H1 (cell line): ENCODE measurements at regions of chr22 and their contacts with region 1.

Region 1: DNA sequence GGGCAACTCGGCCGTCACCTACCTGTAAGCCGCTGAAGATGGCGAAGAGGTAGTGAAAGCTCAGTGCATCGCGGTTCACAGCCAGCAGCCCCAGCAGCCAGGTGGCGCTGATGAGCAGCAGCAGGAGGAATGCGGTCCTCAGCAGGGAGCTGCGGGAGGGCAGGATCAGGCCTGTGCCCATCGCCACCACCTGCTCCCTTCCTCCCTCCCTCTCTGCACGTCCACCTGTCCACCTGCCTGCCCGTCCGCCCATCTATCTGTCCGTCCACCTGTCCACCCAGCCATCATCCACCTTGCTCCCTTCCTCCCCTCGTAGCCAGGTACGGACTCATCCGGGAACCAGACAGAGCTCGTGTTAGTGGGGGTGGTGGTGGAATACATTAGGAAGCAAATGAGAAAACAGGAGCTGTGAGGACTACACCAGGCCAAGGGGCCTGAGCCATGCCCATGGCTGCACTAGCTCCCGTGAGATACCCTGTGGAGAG is 32.2 kb downstream of the TRMU start:
- DNase-seq: peak; percentile 61 to 96
- H3K4me3 ChIP-seq: no peak overlapping the region
- H3K27ac ChIP-seq: no peak overlapping the region
- H3K4me1 ChIP-seq: peaks cover 0 to 15% (median 6%) of the 10 kb centered on the region in 4 experiments; a peak in 5 of 7 replicates
- H3K27me3 ChIP-seq: no peaks in the 10 kb centered on the region
- CTCF ChIP-seq: peak; percentile 94 to 100 (median 100)
- EP300 ChIP-seq: peak in 1 of 2 experiments; percentile 49; a peak in 1 of 3 replicates
- POLR2A ChIP-seq: no peak
- RAD21 ChIP-seq: peak; percentile 85 to 88

Region 2: DNA sequence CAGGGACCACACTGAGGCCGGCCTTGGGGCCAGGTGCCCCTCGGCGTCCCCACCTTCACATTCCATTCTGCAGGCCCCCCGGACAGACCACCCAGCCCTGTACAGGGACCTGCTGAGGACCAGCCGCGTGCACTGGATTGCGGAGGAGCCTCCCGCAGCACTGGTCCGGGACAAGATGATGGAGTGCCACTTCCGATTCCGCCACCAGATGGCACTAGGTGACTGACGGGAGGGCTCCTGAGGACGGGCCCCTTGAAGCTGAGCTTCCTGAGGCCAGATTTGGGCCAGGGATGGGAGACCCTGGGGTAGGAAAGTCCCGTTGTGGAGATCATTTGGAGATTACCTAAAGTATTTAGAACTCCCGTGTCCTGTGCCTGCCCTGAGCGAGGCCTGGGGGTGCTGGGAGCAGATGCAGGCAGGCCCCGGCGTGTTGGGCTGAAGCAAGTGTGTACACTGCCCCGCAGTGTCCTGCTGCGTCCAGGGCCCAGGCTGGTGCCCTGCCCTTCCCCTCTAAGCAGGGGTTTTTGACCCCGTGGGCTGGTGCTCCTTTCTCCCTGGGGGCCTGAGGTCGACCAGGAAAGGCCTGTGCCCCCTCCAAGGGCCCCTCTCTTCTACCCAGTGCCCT is 12.3 kb before region 1 on chr22:
- CTCF ChIA-PET with region 1: interaction called, 44 read pairs
- POLR2A ChIA-PET with region 1: interaction called, 4 read pairs
- DNase-seq: peak in 1 of 2 experiments; percentile 97
- H3K4me3 ChIP-seq: no peak overlapping the region
- H3K27ac ChIP-seq: 0 out of 2 replicates have a peak overlapping the region, but pooled peaks have one; percentile 35
- H3K4me1 ChIP-seq: no peaks in the 10 kb centered on the region
- H3K27me3 ChIP-seq: no peaks in the 10 kb centered on the region
- CTCF ChIP-seq: peak; percentile 91 to 95 (median 92)
- EP300 ChIP-seq: no peak
- POLR2A ChIP-seq: no peak
- RAD21 ChIP-seq: peak; percentile 95 to 98

Region 3: GRCh38 chr22:46393873-46394272 is 26.1 kb after region 1 on chr22:
- CTCF ChIA-PET with region 1: interaction called, 14 read pairs
- POLR2A ChIA-PET with region 1: no interaction called
- DNase-seq: no peak
- H3K4me3 ChIP-seq: no peak overlapping the region
- H3K27ac ChIP-seq: no peak overlapping the region
- H3K4me1 ChIP-seq: peaks cover 0 to 2% (median 0%) of the 10 kb centered on the region in 4 experiments; a peak in 2 of 7 replicates
- H3K27me3 ChIP-seq: no peaks in the 10 kb centered on the region
- CTCF ChIP-seq: no peak
- EP300 ChIP-seq: no peak
- POLR2A ChIP-seq: no peak
- RAD21 ChIP-seq: no peak

Region 4: DNA sequence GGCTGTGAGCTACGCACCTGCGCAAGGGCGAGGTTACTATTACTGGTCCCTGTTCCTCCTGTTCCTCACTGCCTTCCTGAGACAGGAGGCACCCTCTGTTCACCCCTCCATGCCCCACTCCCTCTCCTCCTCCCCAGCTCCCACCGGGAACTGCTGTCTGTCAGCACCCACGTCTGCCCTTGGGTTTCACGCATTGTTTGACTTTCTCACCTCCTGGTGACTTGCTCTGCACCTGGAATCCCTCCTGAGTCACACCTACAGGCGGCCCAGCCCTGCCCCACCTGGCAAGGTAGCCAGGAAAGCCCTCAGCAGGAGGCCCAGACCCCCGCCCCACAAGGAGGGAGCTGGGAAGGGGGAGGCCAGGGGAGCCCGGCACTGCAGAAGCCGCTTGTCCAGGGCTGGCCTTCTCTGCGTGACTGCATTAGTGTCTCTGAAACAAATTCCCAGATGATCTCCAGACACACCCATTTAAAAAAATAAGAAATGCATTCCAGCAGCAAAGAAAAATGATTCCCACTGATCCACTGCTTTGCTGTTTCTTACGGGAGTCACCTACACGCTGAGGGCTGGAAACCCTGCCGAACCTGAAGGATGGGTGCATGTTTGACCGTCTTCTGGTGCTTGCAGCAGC is 83.3 kb after region 1 on chr22:
- CTCF ChIA-PET with region 1: interaction called, 14 read pairs
- POLR2A ChIA-PET with region 1: no interaction called
- DNase-seq: no peak
- H3K4me3 ChIP-seq: no peak overlapping the region
- H3K27ac ChIP-seq: no peak overlapping the region
- H3K4me1 ChIP-seq: peaks cover 0 to 5% (median 0%) of the 10 kb centered on the region in 4 experiments; a peak in 1 of 7 replicates
- H3K27me3 ChIP-seq: no peaks in the 10 kb centered on the region; a peak in 1 of 7 replicates
- CTCF ChIP-seq: no peak
- EP300 ChIP-seq: no peak
- POLR2A ChIP-seq: no peak
- RAD21 ChIP-seq: no peak

Region 5: DNA sequence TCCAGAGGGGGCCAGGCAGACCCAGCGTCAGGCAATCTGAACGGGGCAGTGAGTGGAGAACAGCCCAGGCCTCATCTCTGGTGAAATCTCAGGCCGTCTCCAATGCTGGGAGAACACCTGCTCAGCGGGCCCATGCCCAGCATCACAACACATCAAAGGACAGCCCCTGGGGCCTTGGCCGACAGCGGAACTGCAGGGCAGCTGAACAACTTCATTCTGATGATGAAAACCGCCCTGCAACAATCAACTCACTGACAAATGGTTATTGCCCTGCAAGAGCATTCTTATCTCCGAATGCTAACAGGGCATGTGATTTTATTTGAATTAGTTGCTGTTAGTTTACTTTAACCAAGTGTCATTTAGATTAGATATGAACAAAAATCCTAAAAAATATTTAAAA is 155.0 kb after region 1 on chr22:
- CTCF ChIA-PET with region 1: interaction called, 16 read pairs
- POLR2A ChIA-PET with region 1: no interaction called
- DNase-seq: no peak
- H3K4me3 ChIP-seq: no peak overlapping the region
- H3K27ac ChIP-seq: no peak overlapping the region
- H3K4me1 ChIP-seq: peaks cover 0 to 6% (median 0%) of the 10 kb centered on the region in 4 experiments; a peak in 3 of 7 replicates
- H3K27me3 ChIP-seq: no peaks in the 10 kb centered on the region
- CTCF ChIP-seq: no peak
- EP300 ChIP-seq: no peak
- POLR2A ChIP-seq: no peak
- RAD21 ChIP-seq: no peak

Region 6: GRCh38 chr22:46592390-46592872 is 224.7 kb after region 1 on chr22:
- CTCF ChIA-PET with region 1: no interaction called
- POLR2A ChIA-PET with region 1: no interaction called
- DNase-seq: no peak
- H3K4me3 ChIP-seq: no peak overlapping the region
- H3K27ac ChIP-seq: no peak overlapping the region
- H3K4me1 ChIP-seq: peaks cover 0 to 21% (median 10%) of the 10 kb centered on the region in 4 experiments; a peak in 5 of 7 replicates
- H3K27me3 ChIP-seq: no peaks in the 10 kb centered on the region
- CTCF ChIP-seq: no peak
- EP300 ChIP-seq: no peak
- POLR2A ChIP-seq: no peak
- RAD21 ChIP-seq: no peak